ENCODE measurements at regions of chr2 and their contacts with region 1.

Region 1: GRCh38 chr2:218269899-218270720 is at the starts of genes AAMP and PNKD:
- DNase-seq: peak; percentile 98
- ATAC-seq: peak; percentile 87
- H3K4me3 ChIP-seq: peak within 1 kb of the TSS; percentile 91 to 97
- H3K27ac ChIP-seq: peak within 1 kb of the TSS; percentile 59
- H3K4me1 ChIP-seq: peaks cover 13 to 28% of the 10 kb centered on the region in 2 experiments
- H3K27me3 ChIP-seq: no peaks in the 10 kb centered on the region
- CTCF ChIP-seq: no peak
- POLR2A ChIP-seq: peak; percentile 66
- RAD21 ChIP-seq: no peak
- total RNA-seq, gene AAMP: 111 TPM
- total RNA-seq, gene PNKD: 58.1 TPM

Region 2: DNA sequence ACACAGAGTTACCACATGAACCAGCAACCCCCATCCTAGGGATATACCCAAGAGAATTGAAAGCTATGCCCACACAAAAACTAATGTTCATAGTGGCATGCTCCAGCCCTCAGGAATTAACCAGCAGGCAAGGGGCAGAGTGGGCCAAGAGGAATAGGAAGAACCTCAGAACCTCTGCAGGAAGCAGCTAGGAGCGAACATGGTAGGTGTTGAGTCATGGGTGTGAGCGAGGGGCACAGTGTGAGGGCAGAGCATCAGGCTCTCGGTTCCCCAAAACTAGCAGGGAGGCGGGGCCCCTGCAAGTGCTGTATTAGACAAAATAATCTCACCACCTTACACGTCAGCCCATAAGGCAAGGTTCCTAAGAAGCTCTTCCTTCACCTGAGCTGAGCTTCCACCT is 206.6 kb before region 1 on chr2:
- CTCF ChIA-PET with region 1: no interaction called
- POLR2A ChIA-PET with region 1: no interaction called
- RAD21 ChIA-PET with region 1: no interaction called
- intact Hi-C with region 1: no loop called
- DNase-seq: no peak
- ATAC-seq: no peak
- H3K4me3 ChIP-seq: no peak overlapping the region
- H3K27ac ChIP-seq: no peak overlapping the region
- H3K4me1 ChIP-seq: peaks cover 0 to under 1% of the 10 kb centered on the region in 2 experiments; a peak in 1 of 4 replicates
- H3K27me3 ChIP-seq: peaks cover 1% of the 10 kb centered on the region; the same call in 1 of the 2 replicates
- CTCF ChIP-seq: no peak
- POLR2A ChIP-seq: no peak
- RAD21 ChIP-seq: no peak

Region 3: GRCh38 chr2:218257390-218257981 is 12.6 kb before region 1 on chr2:
- CTCF ChIA-PET with region 1: interaction called, 16 read pairs
- POLR2A ChIA-PET with region 1: interaction called, 3 read pairs
- RAD21 ChIA-PET with region 1: no interaction called
- intact Hi-C with region 1: no loop called
- DNase-seq: peak; percentile 35
- ATAC-seq: peak; percentile 75
- H3K4me3 ChIP-seq: no peak overlapping the region
- H3K27ac ChIP-seq: peak overlapping the region; percentile 19; the same call in 1 of the 2 replicates
- H3K4me1 ChIP-seq: peaks cover 0 to 5% of the 10 kb centered on the region in 2 experiments; a peak in 1 of 4 replicates
- H3K27me3 ChIP-seq: no peaks in the 10 kb centered on the region
- CTCF ChIP-seq: peak; percentile 59 to 82 (median 76); a peak in 5 of 6 replicates
- POLR2A ChIP-seq: no peak
- RAD21 ChIP-seq: peak; percentile 58

Region 4: DNA sequence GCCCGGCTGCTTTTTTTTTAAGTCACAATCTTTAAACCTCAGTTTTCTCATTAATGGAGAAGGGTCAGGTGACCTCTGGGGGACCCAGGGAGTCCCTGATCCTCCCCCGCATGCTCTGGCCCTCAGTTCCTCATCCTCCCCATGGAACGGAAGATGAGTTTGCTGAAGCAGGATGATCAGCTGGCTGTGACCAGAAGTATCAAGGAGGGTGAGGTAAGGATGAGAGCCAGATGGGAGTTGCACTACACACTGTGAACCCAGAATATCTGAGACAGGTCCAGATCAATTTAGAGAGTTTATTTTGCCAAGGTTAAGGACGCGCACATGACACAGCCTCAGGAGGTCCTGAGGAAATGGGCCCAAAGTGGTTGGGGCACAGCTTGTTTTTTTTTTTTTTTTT is 90.3 kb after region 1 on chr2:
- CTCF ChIA-PET with region 1: interaction called, 7 read pairs
- POLR2A ChIA-PET with region 1: no interaction called
- RAD21 ChIA-PET with region 1: no interaction called
- intact Hi-C with region 1: loop called (anchors 1 kb)
- DNase-seq: no peak
- ATAC-seq: no peak
- H3K4me3 ChIP-seq: no peak overlapping the region
- H3K27ac ChIP-seq: no peak overlapping the region
- H3K4me1 ChIP-seq: peaks cover 8 to 19% of the 10 kb centered on the region in 2 experiments; a peak in 3 of 4 replicates
- H3K27me3 ChIP-seq: no peaks in the 10 kb centered on the region
- CTCF ChIP-seq: no peak
- POLR2A ChIP-seq: no peak
- RAD21 ChIP-seq: no peak

Region 5: GRCh38 chr2:218466016-218466521 is 196.0 kb after region 1 on chr2:
- CTCF ChIA-PET with region 1: interaction called, 5 read pairs
- POLR2A ChIA-PET with region 1: no interaction called
- RAD21 ChIA-PET with region 1: no interaction called
- intact Hi-C with region 1: loop called (anchors 1 kb)
- DNase-seq: no peak
- ATAC-seq: peak; percentile 57; the same call in 1 of the 2 replicates
- H3K4me3 ChIP-seq: no peak overlapping the region
- H3K27ac ChIP-seq: no peak overlapping the region
- H3K4me1 ChIP-seq: no peaks in the 10 kb centered on the region
- H3K27me3 ChIP-seq: no peaks in the 10 kb centered on the region
- CTCF ChIP-seq: peak; percentile 30 to 64 (median 33); a peak in 4 of 6 replicates
- POLR2A ChIP-seq: no peak
- RAD21 ChIP-seq: peak; percentile 57

Measured in HCT116 (cell line).